ENCODE measurements at regions of chr16 and their contacts with region 1.

Region 1: GRCh38 chr16:28218104-28218503 is 6.3 kb upstream of the XPO6 start:
- DNase-seq: no peak
- H3K4me3 ChIP-seq: no peak overlapping the region
- H3K27ac ChIP-seq: no peak overlapping the region
- H3K4me1 ChIP-seq: no peaks in the 10 kb centered on the region
- H3K27me3 ChIP-seq: no peaks in the 10 kb centered on the region
- CTCF ChIP-seq: no peak

Region 2: GRCh38 chr16:27999687-28000086 is 218.4 kb before region 1 on chr16:
- intact Hi-C with region 1: no loop called
- DNase-seq: no peak
- H3K4me3 ChIP-seq: no peak overlapping the region
- H3K27ac ChIP-seq: no peak overlapping the region
- H3K4me1 ChIP-seq: no peaks in the 10 kb centered on the region
- H3K27me3 ChIP-seq: no peaks in the 10 kb centered on the region
- CTCF ChIP-seq: no peak

Region 3: DNA sequence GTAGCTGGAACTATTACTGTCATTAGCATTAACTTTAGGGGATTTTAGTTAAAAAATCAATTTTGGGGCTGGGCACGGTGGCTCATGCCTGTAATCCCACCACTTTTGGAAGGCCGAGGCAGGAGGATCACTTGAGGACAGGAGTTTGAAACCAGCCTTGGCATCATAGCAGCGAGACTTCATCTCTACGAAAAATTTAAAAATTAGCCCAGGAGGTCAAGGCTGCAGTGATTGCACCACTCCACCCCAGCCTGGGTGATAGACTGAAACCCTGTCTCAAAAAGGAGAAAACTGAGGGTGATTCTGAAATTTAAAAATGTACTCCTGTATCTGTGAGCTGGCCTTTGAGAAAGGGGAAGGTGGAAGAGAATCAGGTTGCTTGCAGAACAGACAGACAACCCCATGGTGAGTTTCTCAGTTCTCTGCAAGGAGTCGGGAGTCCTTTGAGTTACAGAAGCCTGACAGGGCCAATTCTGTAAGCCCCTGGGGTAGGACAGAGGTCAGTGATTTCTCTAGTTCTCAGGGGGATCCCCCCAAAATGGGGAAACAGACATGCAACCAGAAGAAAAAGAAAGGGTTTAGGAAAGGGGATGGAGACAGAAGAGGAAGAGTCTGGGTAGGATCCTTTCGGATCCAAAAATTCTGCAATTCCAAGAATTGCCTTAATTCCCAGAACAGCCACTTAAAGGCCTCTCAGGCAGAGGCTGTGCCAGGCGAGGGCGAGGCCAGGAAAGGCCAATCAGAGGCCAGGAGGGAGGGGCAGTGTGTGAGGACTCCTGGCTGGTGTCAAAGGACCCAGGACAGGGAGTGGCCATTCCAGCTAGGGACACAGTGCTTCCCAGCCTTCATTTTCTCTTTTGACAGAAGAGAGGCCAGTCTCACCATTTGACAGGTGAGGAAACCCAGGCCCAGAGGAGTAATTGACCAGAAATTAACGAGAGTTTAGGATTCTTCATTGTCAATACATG is 314.0 kb after region 1 on chr16:
- intact Hi-C with region 1: loop called (anchors 5 kb)
- DNase-seq: peak; percentile 92 to 93
- H3K4me3 ChIP-seq: no peak overlapping the region
- H3K27ac ChIP-seq: peak overlapping the region; percentile 66 to 71
- H3K4me1 ChIP-seq: peaks cover 0 to 59% (median 17%) of the 10 kb centered on the region in 4 donors
- H3K27me3 ChIP-seq: no peaks in the 10 kb centered on the region
- CTCF ChIP-seq: no peak

Region 4: GRCh38 chr16:28543072-28543471 is 325.0 kb after region 1 on chr16:
- intact Hi-C with region 1: no loop called
- DNase-seq: peak; percentile 44 to 75
- H3K4me3 ChIP-seq: no peak overlapping the region
- H3K27ac ChIP-seq: no peak overlapping the region
- H3K4me1 ChIP-seq: peaks cover 0 to 14% (median 11%) of the 10 kb centered on the region in 4 donors
- H3K27me3 ChIP-seq: no peaks in the 10 kb centered on the region
- CTCF ChIP-seq: no peak